ENCODE measurements at regions of chr2 and their contacts with region 1.

Region 1: DNA sequence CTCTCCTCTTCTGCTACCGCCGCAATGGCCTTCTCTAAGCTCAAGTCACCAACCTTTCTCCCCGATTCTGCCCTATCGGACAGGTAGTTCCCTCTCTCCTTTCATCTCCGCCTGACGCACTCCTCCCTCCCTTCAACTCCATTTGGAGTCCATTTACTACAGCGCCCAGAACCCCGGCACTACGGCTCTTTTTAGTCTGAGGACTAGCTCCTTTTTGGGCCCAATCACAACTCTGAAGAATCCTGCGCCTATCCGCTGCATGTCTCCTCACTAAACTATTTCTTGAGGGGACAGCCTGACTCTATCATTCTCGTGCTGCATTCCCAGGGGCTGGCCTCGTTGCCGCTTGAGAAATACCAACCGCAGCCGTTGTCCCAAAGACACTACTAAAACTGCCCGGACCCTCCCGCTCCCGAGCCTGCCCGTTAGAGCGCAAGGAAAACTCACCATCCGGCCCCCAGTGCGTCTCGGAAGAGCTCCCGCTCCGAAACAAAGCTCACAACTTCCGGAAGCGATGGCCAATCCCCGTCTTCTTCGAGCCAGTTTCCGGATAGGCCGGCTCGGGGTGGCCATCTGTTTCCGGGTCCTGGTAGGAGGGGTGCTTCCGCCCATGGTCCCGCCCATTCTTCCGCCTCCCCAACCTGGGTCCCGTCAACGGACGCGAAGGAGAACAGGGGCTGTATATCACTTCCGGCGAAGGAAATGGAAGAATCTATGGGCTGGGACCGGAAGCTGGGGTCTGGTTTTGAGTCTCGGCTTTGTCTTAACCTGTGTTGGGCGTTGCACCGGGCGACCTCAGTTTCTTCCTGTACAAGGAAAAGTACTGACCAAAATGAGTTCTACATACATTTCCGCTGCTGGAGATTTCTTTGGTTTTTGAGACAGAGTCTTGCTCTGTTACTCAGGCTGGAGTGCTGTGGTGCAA is at the start of gene TPRKB:
- DNase-seq: peak; percentile 85 to 98 (median 93)
- ATAC-seq: peak; percentile 93
- H3K4me3 ChIP-seq: peak within 1 kb of the TSS; percentile 91
- H3K4me3 Mint-ChIP-seq: peak within 1 kb of the TSS; percentile 91
- H3K27ac ChIP-seq: peak within 1 kb of the TSS; percentile 55 to 62
- H3K27ac Mint-ChIP-seq: peak within 1 kb of the TSS; percentile 76
- H3K4me1 ChIP-seq: peaks cover 15% of the 10 kb centered on the region
- H3K4me1 Mint-ChIP-seq: peaks cover 20% of the 10 kb centered on the region
- H3K27me3 ChIP-seq: no peaks in the 10 kb centered on the region
- H3K27me3 Mint-ChIP-seq: no peaks in the 10 kb centered on the region
- CTCF ChIP-seq: no peak
- total RNA-seq, gene TPRKB: 16.1 to 18.2 TPM

Region 2: DNA sequence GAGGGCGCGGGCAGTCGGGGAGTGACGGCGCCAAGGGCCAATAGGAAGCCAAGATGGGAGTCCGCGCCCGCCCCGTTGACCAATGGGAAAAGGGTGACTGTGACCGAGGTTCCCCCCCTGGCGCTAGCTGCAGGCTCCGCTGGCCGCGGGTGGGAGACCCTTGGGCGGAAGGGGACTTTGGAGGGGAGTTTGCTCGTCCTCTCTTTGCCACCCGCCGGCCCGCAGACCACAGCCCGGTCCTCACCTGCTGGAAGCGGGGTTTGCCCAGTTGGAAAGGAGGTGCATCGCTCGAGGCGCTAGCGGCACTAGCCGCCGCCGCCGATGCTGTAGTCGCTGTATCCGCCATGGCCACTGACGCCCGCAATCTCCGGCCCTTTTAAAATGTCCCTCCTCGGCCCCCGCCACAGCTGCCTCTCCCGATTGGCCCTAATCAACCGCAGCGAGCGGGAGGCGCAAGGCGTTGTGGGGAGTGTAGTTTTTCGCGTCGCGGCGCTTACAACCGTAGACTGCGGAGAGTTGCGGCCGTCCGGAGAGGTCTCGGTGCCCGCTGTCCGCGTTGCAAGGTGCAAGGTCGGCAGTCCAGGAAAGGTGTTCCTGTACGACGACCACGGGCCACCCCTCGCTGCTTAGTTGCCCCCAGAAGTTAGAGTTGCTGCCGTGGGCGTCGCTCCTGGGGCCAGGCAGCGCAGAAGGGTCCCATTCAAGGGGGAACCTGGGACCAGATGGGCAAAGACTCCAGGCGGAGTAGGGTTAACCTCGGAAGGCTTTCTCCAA is 665.6 kb before region 1 on chr2 and contains the start of gene SFXN5:
- CTCF ChIA-PET with region 1: no interaction called
- POLR2A ChIA-PET with region 1: no interaction called
- intact Hi-C with region 1: loop called in 1 of 2 experiments (anchors 5 kb)
- DNase-seq: peak; percentile 87 to 96 (median 92)
- ATAC-seq: peak; percentile 84
- H3K4me3 ChIP-seq: peak within 1 kb of the TSS; percentile 84
- H3K4me3 Mint-ChIP-seq: peak within 1 kb of the TSS; percentile 99
- H3K27ac ChIP-seq: peak within 1 kb of the TSS; percentile 81 to 86
- H3K27ac Mint-ChIP-seq: peak within 1 kb of the TSS; percentile 91
- H3K4me1 ChIP-seq: peaks cover 21% of the 10 kb centered on the region
- H3K4me1 Mint-ChIP-seq: peaks cover 31% of the 10 kb centered on the region
- H3K27me3 ChIP-seq: no peaks in the 10 kb centered on the region
- H3K27me3 Mint-ChIP-seq: no peaks in the 10 kb centered on the region
- CTCF ChIP-seq: no peak
- total RNA-seq, gene SFXN5: 5.1 to 5.4 TPM

Region 3: GRCh38 chr2:73284296-73285158 is 452.6 kb before region 1 on chr2 and contains the start of gene FBXO41:
- CTCF ChIA-PET with region 1: no interaction called
- POLR2A ChIA-PET with region 1: no interaction called
- intact Hi-C with region 1: loop called in 1 of 2 experiments (anchors 10 kb)
- DNase-seq: peak; percentile 36 to 79 (median 59)
- ATAC-seq: peak; percentile 79
- H3K4me3 ChIP-seq: peak within 1 kb of the TSS; percentile 73
- H3K4me3 Mint-ChIP-seq: peak within 1 kb of the TSS; percentile 91
- H3K27ac ChIP-seq: peak within 1 kb of the TSS in 1 of 2 donors; percentile 33
- H3K27ac Mint-ChIP-seq: peak within 1 kb of the TSS; percentile 37
- H3K4me1 ChIP-seq: peaks cover 22% of the 10 kb centered on the region
- H3K4me1 Mint-ChIP-seq: peaks cover 22% of the 10 kb centered on the region
- H3K27me3 ChIP-seq: no peaks in the 10 kb centered on the region
- H3K27me3 Mint-ChIP-seq: peaks cover 15% of the 10 kb centered on the region
- CTCF ChIP-seq: no peak
- total RNA-seq, gene FBXO41: 14.0 to 16.0 TPM

Region 4: DNA sequence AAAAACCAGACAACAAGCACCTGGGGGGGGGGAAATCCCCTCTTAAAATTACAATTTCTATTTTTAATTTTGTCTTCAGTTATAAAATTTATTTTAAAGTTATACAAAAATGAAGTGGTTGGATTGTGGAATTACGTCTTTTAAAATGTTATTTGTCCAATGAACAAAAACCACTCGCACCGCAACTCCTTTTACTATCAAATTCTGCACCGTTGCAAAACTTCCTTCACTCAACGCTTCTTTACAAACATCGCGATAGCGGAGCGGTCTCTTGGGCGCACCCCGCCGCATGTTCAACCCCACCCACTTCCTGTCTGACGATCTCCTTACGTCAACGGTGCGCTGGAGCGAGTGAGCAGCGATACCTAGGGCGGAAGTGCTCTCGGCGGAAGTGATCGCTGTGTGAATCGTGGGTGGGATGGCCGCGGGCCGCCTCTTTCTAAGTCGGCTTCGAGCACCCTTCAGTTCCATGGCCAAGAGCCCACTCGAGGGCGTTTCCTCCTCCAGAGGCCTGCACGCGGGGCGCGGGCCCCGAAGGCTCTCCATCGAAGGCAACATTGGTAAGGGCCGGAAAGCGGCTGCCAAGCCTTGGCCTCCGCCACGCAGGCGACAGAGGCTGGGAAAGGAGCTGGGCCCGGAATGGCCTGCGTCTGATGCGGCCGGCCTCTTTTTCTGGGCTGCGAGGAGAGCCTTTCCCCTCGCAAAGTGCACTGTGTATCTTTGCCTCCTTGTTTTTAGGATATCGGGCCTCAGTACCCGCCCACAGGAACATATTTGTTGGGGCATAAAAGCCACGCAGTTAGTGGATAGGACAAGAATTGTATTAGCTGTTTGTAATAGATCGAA is 189.6 kb after region 1 on chr2 and contains the start of gene DGUOK:
- CTCF ChIA-PET with region 1: no interaction called
- POLR2A ChIA-PET with region 1: no interaction called
- intact Hi-C with region 1: loop called in 1 of 2 experiments (anchors 5 kb)
- DNase-seq: peak; percentile 90 to 100 (median 94)
- ATAC-seq: peak; percentile 97
- H3K4me3 ChIP-seq: peak within 1 kb of the TSS; percentile 78
- H3K4me3 Mint-ChIP-seq: peak within 1 kb of the TSS; percentile 83
- H3K27ac ChIP-seq: peak within 1 kb of the TSS; percentile 97
- H3K27ac Mint-ChIP-seq: peak within 1 kb of the TSS; percentile 98
- H3K4me1 ChIP-seq: peaks cover 46% of the 10 kb centered on the region
- H3K4me1 Mint-ChIP-seq: peaks cover 53% of the 10 kb centered on the region
- H3K27me3 ChIP-seq: no peaks in the 10 kb centered on the region
- H3K27me3 Mint-ChIP-seq: no peaks in the 10 kb centered on the region
- CTCF ChIP-seq: no peak
- total RNA-seq, gene DGUOK: 30.5 to 32.0 TPM

Region 5: GRCh38 chr2:74391580-74392448 is 654.7 kb after region 1 on chr2:
- CTCF ChIA-PET with region 1: no interaction called
- POLR2A ChIA-PET with region 1: no interaction called
- intact Hi-C with region 1: loop called in 1 of 2 experiments (anchors 5 kb)
- DNase-seq: peak; percentile 92 to 98 (median 96)
- ATAC-seq: peak; percentile 90
- H3K4me3 ChIP-seq: peak overlapping the region; percentile 72
- H3K4me3 Mint-ChIP-seq: peak overlapping the region; percentile 99
- H3K27ac ChIP-seq: peak overlapping the region; percentile 88 to 92
- H3K27ac Mint-ChIP-seq: no peak overlapping the region
- H3K4me1 ChIP-seq: peaks cover 34% of the 10 kb centered on the region
- H3K4me1 Mint-ChIP-seq: peaks cover 9% of the 10 kb centered on the region
- H3K27me3 ChIP-seq: peaks cover 0 to 5% of the 10 kb centered on the region in 2 experiments
- H3K27me3 Mint-ChIP-seq: no peaks in the 10 kb centered on the region
- CTCF ChIP-seq: peak; percentile 99

Region 6: DNA sequence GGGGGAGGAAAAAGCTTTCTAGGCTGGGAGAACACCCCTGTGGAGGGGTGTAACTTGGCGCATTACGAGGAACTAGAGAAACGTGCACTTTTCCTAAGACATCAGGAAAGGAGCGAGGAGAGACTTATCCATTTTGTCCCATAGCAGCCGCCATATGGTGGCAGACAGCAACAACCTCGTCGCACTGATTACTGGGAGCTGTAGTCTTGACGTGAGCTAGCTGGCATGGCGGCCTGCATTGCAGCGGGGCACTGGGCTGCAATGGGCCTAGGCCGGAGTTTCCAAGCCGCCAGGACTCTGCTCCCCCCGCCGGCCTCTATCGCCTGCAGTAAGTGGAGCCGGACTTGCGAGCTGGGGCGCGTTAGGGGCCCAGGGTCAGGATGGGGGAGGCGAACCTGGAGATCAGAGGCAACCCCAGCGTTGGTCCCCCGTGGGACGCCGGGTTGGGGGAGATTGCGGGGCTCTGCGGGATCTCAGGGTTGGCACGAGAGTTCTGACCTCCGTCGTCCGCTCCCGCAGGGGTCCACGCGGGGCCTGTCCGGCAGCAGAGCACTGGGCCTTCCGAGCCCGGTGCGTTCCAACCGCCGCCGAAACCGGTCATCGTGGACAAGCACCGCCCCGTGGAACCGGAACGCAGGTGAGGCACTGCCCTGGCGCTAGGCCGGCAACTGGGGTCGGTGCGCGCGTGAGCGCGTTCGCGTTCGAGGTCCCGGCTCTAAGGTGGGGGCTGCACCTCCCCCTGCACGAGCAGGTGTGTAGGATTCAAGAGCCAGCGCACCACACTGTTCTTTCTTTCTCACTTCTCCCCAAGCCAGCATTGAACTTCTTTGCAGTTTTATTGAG is 1909.7 kb after region 1 on chr2 and contains the start of gene MRPL19:
- CTCF ChIA-PET with region 1: no interaction called
- POLR2A ChIA-PET with region 1: no interaction called
- intact Hi-C with region 1: loop called in 1 of 2 experiments (anchors 10 kb)
- DNase-seq: peak; percentile 52 to 89 (median 68)
- ATAC-seq: peak; percentile 96
- H3K4me3 ChIP-seq: peak within 1 kb of the TSS; percentile 98
- H3K4me3 Mint-ChIP-seq: peak within 1 kb of the TSS; percentile 96
- H3K27ac ChIP-seq: peak within 1 kb of the TSS; percentile 46 to 50
- H3K27ac Mint-ChIP-seq: peak within 1 kb of the TSS; percentile 92
- H3K4me1 ChIP-seq: peaks cover 16% of the 10 kb centered on the region
- H3K4me1 Mint-ChIP-seq: peaks cover 49% of the 10 kb centered on the region
- H3K27me3 ChIP-seq: no peaks in the 10 kb centered on the region
- H3K27me3 Mint-ChIP-seq: no peaks in the 10 kb centered on the region
- CTCF ChIP-seq: no peak
- total RNA-seq, gene MRPL19: 10.7 to 14.9 TPM

Measured in CD4-positive, alpha-beta T cell (primary cell).